ENCODE measurements at regions of chr7 and their contacts with region 1.

Region 1: DNA sequence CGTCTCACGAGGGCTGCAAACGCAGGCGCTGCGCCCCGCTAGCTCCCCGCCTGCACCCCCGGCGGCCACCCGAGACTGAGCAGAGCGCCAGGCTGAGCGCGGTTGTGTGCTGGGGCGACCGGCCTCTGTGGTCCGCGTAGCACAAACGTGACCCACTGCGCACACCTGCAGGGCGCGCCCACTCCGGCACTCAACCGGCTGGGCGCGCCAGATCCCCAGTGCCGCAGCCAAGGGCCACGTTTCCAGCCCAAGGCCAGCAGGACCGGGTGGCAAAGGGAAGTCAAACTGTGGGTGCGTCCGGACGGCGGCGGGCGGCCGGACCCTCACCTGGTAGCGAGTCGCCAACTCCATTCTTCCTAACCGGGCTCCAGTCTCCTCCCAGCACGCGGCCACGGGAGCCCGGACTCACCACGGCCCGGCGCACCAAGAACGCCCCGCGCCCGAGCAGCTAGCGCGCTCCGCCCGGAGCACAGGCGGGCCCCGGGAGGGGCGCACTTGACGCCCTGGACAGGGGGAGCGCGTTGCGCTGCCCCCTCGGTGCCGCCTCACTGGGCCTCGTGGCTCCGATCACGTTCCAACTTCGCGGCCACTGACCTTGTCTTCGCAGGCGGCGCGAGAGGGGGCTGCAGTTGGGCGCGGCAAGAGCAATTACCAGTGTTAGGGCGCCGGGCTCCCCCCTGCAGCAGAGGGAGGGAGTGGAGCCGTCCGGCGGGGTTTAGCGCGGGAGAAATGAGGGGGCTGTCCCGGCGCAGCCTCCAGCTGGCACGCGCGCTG is at the start of gene CDCA7L:
- DNase-seq: peak; percentile 80
- ATAC-seq: peak; percentile 77
- H3K4me3 Mint-ChIP-seq: peak within 1 kb of the TSS; percentile 94
- H3K27ac Mint-ChIP-seq: peak within 1 kb of the TSS; percentile 96
- H3K4me1 Mint-ChIP-seq: peaks cover 70% of the 10 kb centered on the region
- H3K27me3 Mint-ChIP-seq: no peaks in the 10 kb centered on the region
- CTCF ChIP-seq: no peak
- total RNA-seq, gene CDCA7L: 69.8 and 70.3 TPM in 2 replicates

Region 2: DNA sequence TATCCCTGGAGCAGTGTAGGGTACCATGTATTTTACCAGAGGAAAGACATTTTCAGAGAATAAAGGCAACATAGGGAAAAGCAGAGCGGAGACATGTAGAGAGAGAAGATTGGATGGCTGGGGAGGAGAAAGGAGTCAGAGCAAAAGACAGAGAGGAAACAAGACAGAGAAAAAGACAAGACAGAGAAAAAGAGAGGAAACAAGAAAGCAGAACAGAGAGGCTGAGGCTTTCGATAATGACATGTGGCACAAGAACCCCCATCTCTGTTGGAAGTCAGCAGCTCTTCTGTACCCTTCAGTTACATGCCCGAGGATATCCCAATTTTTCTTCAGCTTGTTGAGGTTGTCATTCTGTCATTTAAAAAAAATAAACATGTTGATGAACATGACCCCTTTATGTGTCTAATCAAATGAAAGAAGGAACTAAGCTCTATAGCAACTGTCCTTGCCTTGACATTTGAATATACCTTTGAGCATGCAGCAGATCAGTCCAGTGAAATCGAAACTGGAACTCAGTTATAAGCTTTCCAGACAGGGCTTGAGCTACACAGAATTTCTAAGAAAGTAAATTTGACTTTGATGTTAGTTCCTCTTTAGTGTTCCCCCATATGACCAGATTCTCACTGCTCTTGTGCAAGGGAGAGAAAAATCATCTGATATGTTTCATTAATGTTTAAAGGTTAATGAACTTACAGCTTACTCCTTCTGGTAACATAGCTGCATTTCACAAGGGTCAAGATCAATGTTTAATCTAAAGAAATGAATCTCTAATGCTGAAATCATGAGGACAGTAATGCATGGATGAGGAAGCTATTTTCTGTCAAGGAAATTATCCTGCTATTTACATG is 592.9 kb before region 1 on chr7:
- CTCF ChIA-PET with region 1: no interaction called
- POLR2A ChIA-PET with region 1: interaction called, 7 read pairs
- intact Hi-C with region 1: loop called (anchors 1 kb)
- DNase-seq: no peak
- ATAC-seq: peak; percentile 84
- H3K4me3 Mint-ChIP-seq: peak overlapping the region; percentile 71
- H3K27ac Mint-ChIP-seq: peak overlapping the region; percentile 88
- H3K4me1 Mint-ChIP-seq: peaks cover 58% of the 10 kb centered on the region
- H3K27me3 Mint-ChIP-seq: no peaks in the 10 kb centered on the region
- CTCF ChIP-seq: no peak

Region 3: GRCh38 chr7:21959387-21959776 is 13.7 kb after region 1 on chr7:
- CTCF ChIA-PET with region 1: interaction called, 3 read pairs
- POLR2A ChIA-PET with region 1: interaction called, 70 read pairs
- intact Hi-C with region 1: no loop called
- DNase-seq: no peak
- ATAC-seq: peak; percentile 31
- H3K4me3 Mint-ChIP-seq: no peak overlapping the region
- H3K27ac Mint-ChIP-seq: peak overlapping the region; percentile 66
- H3K4me1 Mint-ChIP-seq: peaks cover 37% of the 10 kb centered on the region
- H3K27me3 Mint-ChIP-seq: no peaks in the 10 kb centered on the region
- CTCF ChIP-seq: no peak

Region 4: GRCh38 chr7:22082886-22083703 is 137.5 kb after region 1 on chr7:
- CTCF ChIA-PET with region 1: interaction called, 5 read pairs
- POLR2A ChIA-PET with region 1: interaction called, 3 read pairs
- intact Hi-C with region 1: loop called (anchors 1 kb)
- DNase-seq: peak; percentile 91
- ATAC-seq: peak; percentile 97
- H3K4me3 Mint-ChIP-seq: peak overlapping the region; percentile 89
- H3K27ac Mint-ChIP-seq: peak overlapping the region; percentile 70
- H3K4me1 Mint-ChIP-seq: peaks cover 13% of the 10 kb centered on the region
- H3K27me3 Mint-ChIP-seq: peaks cover 25% of the 10 kb centered on the region
- CTCF ChIP-seq: peak; percentile 83

Region 5: DNA sequence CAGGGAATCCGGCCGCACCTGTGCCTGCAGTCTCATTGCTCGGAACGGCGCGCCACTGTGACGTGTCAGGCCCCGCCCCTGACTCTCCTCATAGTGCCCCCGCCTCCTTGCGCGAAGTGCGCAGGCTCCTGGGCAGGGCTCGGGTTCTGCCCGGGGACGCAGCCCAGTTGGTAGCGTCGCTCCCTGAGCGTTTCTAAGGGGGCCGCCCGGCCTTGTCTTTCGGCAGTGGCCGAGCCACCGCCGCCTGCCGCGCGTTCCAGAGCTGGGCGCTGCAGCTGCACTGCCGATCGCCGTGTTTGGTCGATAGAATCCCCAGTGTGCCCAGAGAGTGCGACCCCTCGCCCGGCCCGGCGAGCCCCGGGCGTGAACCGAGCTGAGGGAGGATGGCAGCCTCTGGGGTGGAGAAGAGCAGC is 1160.0 kb after region 1 on chr7 and contains the start of gene KLHL7:
- CTCF ChIA-PET with region 1: no interaction called
- POLR2A ChIA-PET with region 1: no interaction called
- intact Hi-C with region 1: loop called (anchors 10 kb)
- DNase-seq: peak; percentile 98
- ATAC-seq: peak; percentile 95
- H3K4me3 Mint-ChIP-seq: peak within 1 kb of the TSS; percentile 94
- H3K27ac Mint-ChIP-seq: peak within 1 kb of the TSS; percentile 97
- H3K4me1 Mint-ChIP-seq: peaks cover 32% of the 10 kb centered on the region
- H3K27me3 Mint-ChIP-seq: no peaks in the 10 kb centered on the region
- CTCF ChIP-seq: no peak
- total RNA-seq, gene KLHL7: 12.2 and 13.4 TPM in 2 replicates

Region 6: DNA sequence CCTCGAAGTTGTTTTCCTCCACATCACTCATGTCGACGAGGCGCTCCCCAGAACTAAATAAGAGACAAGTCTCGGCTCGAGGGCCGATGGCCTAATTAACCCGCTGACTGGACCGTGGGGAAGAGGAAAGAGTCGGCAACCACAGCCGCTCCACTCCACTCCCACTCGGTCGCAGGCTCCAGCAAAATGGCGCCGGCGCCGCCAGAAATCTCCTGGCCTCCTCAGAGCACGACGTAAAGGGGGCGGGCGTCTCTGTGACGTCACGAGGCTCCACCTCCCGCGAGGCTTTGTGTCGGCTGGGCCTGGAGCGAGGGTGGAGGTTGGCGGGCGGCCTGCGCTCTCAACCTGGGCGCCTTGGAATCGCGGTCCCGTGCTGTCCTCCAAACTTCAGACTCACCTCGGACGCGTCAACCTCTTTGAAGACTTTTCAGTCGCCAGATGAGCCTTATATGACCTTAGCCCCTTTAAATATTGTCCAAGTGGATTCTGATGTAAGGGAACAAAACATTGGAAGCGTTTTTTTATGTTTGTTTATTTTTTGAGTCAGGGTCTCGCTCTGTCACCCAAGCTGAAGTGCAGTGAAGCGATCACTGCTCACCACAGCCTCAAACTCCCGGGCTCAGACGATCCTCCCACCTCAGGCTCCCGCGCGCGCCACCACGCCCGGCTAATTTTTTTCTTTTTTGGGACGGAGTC is 1586.3 kb after region 1 on chr7 and contains the start of gene TRA2A:
- CTCF ChIA-PET with region 1: no interaction called
- POLR2A ChIA-PET with region 1: no interaction called
- intact Hi-C with region 1: loop called (anchors 2 kb)
- DNase-seq: peak; percentile 97
- ATAC-seq: peak; percentile 89
- H3K4me3 Mint-ChIP-seq: peak within 1 kb of the TSS; percentile 99
- H3K27ac Mint-ChIP-seq: peak within 1 kb of the TSS; percentile 100
- H3K4me1 Mint-ChIP-seq: peaks cover 49% of the 10 kb centered on the region
- H3K27me3 Mint-ChIP-seq: no peaks in the 10 kb centered on the region
- CTCF ChIP-seq: no peak
- total RNA-seq, gene TRA2A: 123 and 144 TPM in 2 replicates

Measured in activated B cell treated with CpG ODN at 0.5 μM for 24 hours (primary cell).